Activated T-helper 1 cell treated with anti-CD3 and anti-CD28 coated beads, Interleukin-12 subunit alpha, Interleukin-12 subunit beta, Interleukin-2, Interleukin-4 antibody, amounts not matched to agents 30 ng/mL and 10 ng/mL and 1 ng/mL, durations not matched to agents 14 hours and 24 hours and 36 hours (primary cell): ENCODE measurements at regions of chr2 and their contacts with region 1.

Region 1: DNA sequence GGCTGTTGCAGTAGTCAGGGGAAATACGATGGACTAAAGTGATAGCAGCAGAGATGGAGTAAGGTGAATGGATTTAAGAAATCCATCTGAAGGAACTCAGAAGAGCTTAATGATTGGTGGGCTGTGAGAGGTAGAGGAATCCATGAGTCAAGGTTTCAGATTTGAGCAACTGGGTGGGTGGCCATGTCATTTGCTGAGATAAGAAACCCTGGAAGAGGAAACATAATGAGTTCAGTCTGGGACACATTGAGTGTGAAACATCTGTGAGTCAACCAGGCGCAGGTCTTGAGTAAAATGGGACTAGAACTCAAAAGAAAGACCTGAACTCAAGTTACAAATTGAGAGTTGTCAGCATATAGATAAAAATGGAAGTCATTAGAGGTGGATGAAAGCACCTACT is 19.7 kb upstream of the ASNSD1 start:
- DNase-seq: no peak
- H3K4me3 Mint-ChIP-seq: no peak overlapping the region
- H3K27ac Mint-ChIP-seq: peak overlapping the region; percentile 58
- H3K4me1 Mint-ChIP-seq: peaks cover 8% of the 10 kb centered on the region
- H3K27me3 Mint-ChIP-seq: no peaks in the 10 kb centered on the region

Region 2: GRCh38 chr2:189466660-189467059 is 174.9 kb before region 1 on chr2:
- intact Hi-C with region 1: loop called (anchors 5 kb)
- DNase-seq: no peak
- H3K4me3 Mint-ChIP-seq: no peak overlapping the region
- H3K27ac Mint-ChIP-seq: no peak overlapping the region
- H3K4me1 Mint-ChIP-seq: no peaks in the 10 kb centered on the region
- H3K27me3 Mint-ChIP-seq: no peaks in the 10 kb centered on the region